Mammary epithelial cell (primary cell): ENCODE measurements at regions of chr2 and their contacts with region 1.

Region 1: GRCh38 chr2:225422145-225422544 is 22.6 kb downstream of the NYAP2 start:
- DNase-seq: no peak
- H3K4me3 ChIP-seq: no peak overlapping the region
- H3K27ac ChIP-seq: no peak overlapping the region
- H3K4me1 ChIP-seq: no peaks in the 10 kb centered on the region
- H3K27me3 ChIP-seq: no peaks in the 10 kb centered on the region
- CTCF ChIP-seq: no peak

Region 2: DNA sequence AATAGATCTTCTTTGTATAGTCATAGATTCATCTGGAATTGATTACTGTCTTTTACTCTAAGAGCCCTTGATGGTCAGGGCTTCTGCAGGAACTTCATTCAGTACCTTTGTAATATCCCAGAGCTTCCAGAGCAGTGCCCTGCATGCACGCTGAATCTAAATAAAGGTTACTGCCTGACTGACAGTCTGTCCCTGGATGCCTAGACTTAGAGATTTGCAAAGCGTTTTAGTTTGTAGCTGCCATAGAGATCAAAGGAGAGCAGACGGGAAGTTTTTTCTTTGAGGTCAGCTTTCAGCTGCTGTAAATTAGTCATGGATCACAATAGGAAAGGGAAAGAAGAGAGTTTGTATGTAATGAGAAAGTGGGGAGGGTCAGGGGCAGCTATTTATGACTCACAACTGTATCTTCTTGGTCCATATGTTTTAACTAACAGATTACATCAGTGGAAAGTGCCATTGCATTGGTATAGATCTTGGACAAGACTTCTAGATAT is 67.8 kb before region 1 on chr2:
- CTCF ChIA-PET with region 1: no interaction called
- dilution Hi-C with region 1: no loop called
- in situ Hi-C with region 1: no loop called
- intact Hi-C with region 1: no loop called
- DNase-seq: no peak
- H3K4me3 ChIP-seq: no peak overlapping the region
- H3K27ac ChIP-seq: no peak overlapping the region
- H3K4me1 ChIP-seq: no peaks in the 10 kb centered on the region
- H3K27me3 ChIP-seq: no peaks in the 10 kb centered on the region
- CTCF ChIP-seq: no peak

Region 3: GRCh38 chr2:225494100-225494459 is 71.9 kb after region 1 on chr2:
- CTCF ChIA-PET with region 1: no interaction called
- dilution Hi-C with region 1: loop called (anchors 5 kb)
- in situ Hi-C with region 1: no loop called
- intact Hi-C with region 1: no loop called
- DNase-seq: no peak
- H3K4me3 ChIP-seq: no peak overlapping the region
- H3K27ac ChIP-seq: no peak overlapping the region
- H3K4me1 ChIP-seq: no peaks in the 10 kb centered on the region
- H3K27me3 ChIP-seq: no peaks in the 10 kb centered on the region
- CTCF ChIP-seq: no peak